HEK293 (cell line): ENCODE measurements at regions of chr15 and their contacts with region 1.

Region 1: GRCh38 chr15:89760303-89761008 is 9.4 kb upstream of the MESP1 start:
- H3K4me3 ChIP-seq: no peak overlapping the region
- H3K27ac ChIP-seq: no peak overlapping the region
- H3K4me1 ChIP-seq: no peaks in the 10 kb centered on the region
- CTCF ChIP-seq: peak; percentile 81

Region 2: DNA sequence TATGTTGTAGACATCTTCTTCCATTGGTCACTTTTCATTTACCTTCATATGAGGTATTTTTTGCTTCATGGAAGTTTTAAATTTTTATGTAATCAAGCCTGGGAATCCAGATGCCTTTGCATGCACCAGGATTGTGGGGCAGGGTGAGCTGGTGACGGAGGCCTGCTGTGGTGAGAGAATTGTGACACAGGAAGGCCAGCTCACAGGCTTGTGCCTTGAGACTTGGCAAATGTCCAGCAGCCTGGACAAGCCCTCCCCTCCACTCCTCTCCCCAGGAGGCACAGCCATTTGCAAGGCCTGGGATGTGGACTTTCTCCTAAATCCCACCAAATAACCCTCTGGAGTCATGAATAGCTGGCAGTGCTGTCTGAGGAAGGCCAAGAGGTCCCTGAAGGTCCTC is 331.4 kb before region 1 on chr15:
- CTCF ChIA-PET with region 1: no interaction called
- POLR2A ChIA-PET with region 1: no interaction called
- H3K4me3 ChIP-seq: no peak overlapping the region
- H3K27ac ChIP-seq: no peak overlapping the region
- H3K4me1 ChIP-seq: no peaks in the 10 kb centered on the region
- CTCF ChIP-seq: no peak

Region 3: DNA sequence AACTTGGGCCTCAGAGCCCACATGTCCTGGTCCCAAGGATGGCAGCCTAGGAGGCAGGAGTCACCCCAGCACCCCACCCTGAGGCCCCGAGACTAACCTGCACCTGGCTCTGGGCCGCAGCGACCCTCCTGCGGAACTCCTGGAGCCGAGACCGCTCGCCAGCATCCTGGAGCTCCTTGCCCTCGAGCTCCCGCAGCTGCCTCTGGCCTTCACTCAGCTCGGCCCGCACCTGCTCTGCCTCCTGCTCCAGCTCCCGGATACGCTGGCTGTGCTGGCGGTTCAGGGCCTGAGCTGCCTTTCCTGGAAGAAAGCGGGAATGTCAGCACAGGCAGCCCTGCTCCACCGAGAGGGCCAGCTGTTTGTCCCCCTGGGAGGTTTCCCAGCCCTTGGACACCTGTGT is 118.3 kb before region 1 on chr15:
- CTCF ChIA-PET with region 1: no interaction called
- POLR2A ChIA-PET with region 1: no interaction called
- H3K4me3 ChIP-seq: no peak overlapping the region
- H3K27ac ChIP-seq: no peak overlapping the region
- H3K4me1 ChIP-seq: no peaks in the 10 kb centered on the region
- CTCF ChIP-seq: no peak

Region 4: DNA sequence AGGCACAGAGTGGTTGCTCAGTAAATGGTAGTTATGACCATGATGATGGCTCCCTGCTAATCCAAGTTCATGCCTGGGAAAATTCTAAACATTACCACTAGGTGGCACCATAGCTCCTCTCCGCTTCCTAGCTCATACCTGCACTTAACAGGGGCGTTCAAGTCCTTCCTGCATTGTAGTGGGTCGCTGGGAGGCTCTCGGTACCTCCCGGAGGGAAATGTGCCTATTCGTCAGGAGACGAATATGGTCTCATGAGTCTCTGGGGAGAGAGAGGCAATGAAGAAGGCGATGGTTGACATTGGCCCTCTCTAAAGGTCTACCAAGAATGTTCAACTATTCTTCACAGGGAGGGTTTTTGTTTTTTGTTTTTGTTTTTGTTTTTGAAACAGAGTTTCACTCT is 20.3 kb before region 1 on chr15:
- CTCF ChIA-PET with region 1: interaction called, 30 read pairs
- POLR2A ChIA-PET with region 1: no interaction called
- H3K4me3 ChIP-seq: no peak overlapping the region
- H3K27ac ChIP-seq: no peak overlapping the region
- H3K4me1 ChIP-seq: no peaks in the 10 kb centered on the region
- CTCF ChIP-seq: peak; percentile 86

Region 5: DNA sequence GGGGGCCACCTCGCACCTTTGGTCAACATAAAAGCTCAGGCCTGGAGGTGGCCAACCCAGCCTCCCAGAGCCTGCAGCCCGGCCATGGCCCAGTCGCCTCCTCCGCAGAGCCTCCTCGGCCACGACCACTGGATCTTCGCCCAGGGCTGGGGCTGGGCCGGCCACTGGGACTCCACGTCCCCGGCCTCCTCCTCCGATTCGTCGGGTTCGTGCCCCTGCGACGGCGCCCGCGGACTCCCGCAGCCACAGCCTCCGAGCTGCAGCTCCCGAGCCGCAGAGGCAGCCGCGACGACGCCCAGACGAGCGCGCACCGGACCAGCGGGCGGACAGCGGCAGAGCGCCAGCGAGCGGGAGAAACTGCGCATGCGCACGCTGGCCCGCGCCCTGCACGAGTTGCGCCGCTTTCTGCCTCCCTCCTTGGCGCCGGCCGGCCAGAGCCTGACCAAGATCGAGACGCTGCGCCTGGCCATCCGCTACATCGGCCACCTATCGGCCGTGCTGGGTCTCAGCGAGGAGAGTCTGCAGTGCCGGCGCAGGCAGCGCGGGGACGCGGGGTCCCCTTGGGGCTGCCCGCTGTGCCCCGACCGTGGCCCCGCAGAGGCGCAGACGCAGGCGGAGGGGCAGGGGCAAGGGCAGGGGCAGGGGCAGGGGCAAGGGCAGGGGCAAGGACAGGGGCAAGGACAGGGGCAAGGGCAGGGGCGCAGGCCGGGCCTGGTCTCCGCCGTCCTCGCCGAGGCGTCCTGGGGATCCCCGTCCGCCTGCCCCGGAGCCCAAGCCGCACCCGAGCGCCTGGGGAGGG is 16.0 kb after region 1 on chr15 and contains the start of gene MESP2:
- CTCF ChIA-PET with region 1: interaction called, 89 read pairs
- POLR2A ChIA-PET with region 1: no interaction called
- H3K4me3 ChIP-seq: peak within 1 kb of the TSS; percentile 27
- H3K27ac ChIP-seq: peak within 1 kb of the TSS; percentile 10; the same call in 1 of the 2 replicates
- H3K4me1 ChIP-seq: no peaks in the 10 kb centered on the region; the same call in 1 of the 2 replicates
- CTCF ChIP-seq: peak; percentile 26; the same call in 1 of the 2 replicates

Region 6: DNA sequence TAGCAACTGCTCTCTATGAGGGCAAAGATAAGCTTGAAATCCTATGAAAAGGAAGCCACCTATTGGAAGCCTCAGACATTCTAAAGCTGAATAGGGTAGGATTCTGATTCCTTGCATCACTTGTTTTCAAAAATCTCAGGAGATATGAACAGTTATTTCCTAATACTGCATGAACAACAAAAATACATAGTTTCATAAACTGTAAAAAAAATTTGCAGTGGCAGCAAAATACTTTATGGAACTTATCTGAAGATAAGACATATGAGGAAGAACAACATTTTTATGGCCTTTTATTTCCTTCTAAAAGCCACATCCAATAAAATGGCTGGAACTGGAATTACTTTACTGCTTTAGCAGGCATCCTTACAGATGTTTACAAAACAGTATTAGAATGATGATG is 103.5 kb after region 1 on chr15:
- CTCF ChIA-PET with region 1: interaction called, 14 read pairs
- POLR2A ChIA-PET with region 1: no interaction called
- H3K4me3 ChIP-seq: no peak overlapping the region
- H3K27ac ChIP-seq: no peak overlapping the region
- H3K4me1 ChIP-seq: no peaks in the 10 kb centered on the region
- CTCF ChIP-seq: no peak

Region 7: DNA sequence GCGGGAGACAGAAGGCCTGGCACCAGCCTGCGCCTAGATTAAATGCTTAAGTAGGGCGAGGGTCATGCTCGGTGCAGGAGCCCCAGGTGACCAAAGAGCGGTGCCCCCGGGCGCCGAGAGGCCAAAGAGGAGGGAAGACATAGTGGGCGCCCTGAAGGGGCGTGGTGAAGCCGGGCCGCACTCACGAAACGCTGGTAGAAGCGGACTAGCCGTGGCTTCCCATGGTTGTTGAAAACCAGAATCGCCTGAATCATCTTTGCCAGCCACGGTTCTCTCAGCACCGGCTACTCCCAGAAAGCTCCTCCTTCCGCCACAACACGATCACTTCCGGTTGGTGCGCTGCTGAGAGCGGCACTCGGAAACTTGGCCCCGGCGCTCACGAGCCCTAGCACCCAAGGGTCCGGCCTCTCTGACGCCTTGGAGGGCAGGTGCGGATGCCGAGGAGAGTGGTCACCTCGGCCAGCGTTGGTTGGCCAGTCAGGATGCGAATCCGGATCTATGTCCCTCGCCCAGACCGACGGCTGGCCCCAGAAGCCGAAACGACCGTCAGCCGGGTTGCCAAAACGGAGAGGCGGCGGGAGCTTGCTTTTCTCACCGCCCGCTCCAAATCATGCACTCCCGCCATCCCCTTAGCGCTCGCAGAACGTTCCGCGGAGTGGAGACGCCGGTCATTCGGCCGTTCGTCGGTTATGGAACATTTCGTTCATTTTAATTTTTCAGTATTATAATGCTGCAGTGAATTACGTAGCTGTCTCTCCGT is 133.4 kb after region 1 on chr15 and contains the start of gene AP3S2:
- CTCF ChIA-PET with region 1: interaction called, 107 read pairs
- POLR2A ChIA-PET with region 1: interaction called, 8 read pairs
- H3K4me3 ChIP-seq: peak within 1 kb of the TSS; percentile 64
- H3K27ac ChIP-seq: peak within 1 kb of the TSS; percentile 84
- H3K4me1 ChIP-seq: peaks cover 3% of the 10 kb centered on the region
- CTCF ChIP-seq: no peak

Region 8: GRCh38 chr15:89971592-89971997 is 211.1 kb after region 1 on chr15:
- CTCF ChIA-PET with region 1: interaction called, 10 read pairs
- POLR2A ChIA-PET with region 1: no interaction called
- H3K4me3 ChIP-seq: no peak overlapping the region
- H3K27ac ChIP-seq: no peak overlapping the region
- H3K4me1 ChIP-seq: no peaks in the 10 kb centered on the region
- CTCF ChIP-seq: peak; percentile 87

Region 9: GRCh38 chr15:90086868-90087268 is 326.4 kb after region 1 on chr15:
- CTCF ChIA-PET with region 1: interaction called, 16 read pairs
- POLR2A ChIA-PET with region 1: no interaction called
- H3K4me3 ChIP-seq: no peak overlapping the region
- H3K27ac ChIP-seq: no peak overlapping the region
- H3K4me1 ChIP-seq: no peaks in the 10 kb centered on the region
- CTCF ChIP-seq: peak; percentile 32; the same call in 1 of the 2 replicates